ENCODE measurements at regions of chr10 and their contacts with region 1.

Region 1: GRCh38 chr10:96719850-96720421 is 378 bp downstream of the PIK3AP1 start:
- DNase-seq: peak; percentile 88
- ATAC-seq: peak; percentile 68

Region 2: DNA sequence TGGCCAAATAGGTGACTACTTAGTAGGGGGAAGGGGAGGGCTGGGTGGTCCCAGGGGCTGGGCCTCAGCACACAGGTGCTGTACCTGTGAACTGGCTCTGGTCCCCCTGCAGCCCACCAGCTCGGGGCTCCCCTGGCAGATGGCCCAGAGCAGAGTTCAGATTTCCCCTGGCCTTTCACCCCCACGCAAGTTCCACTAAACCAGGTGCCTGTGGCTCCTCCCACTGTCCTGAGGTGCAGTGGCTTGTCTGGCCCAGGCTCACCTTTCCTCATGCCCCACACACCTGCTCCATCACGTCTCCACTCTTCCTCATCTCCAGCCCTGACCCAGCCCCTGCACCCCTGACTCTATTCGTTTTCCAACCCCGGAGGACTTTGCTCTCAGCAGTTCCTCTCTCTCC is 313.8 kb before region 1 on chr10:
- intact Hi-C with region 1: no loop called
- DNase-seq: no peak
- ATAC-seq: no peak

Region 3: DNA sequence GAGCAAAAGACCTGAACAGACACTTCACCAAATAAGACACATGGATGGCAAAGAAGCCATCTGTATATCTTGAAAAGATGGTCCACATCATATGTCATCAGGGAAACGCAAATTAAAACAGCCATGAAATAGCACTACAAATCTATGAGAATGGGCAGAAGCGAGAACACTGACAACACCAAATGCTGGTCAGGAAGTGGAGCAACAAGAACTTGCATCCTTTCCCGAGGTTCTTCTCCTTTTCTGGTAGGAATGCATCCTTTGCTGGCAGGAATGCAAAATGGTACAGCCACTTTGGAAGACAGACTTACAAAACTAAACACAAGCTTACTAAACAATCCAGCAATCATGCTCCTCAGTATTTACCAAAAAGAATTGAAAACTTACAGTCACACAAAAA is 59.6 kb before region 1 on chr10:
- intact Hi-C with region 1: loop called (anchors 2 kb)
- DNase-seq: no peak
- ATAC-seq: no peak

Measured in Right ventricle myocardium inferior (tissue), 1 donor.